Heart left ventricle (tissue), 16 donors: ENCODE measurements at regions of chr13 and their contacts with region 1.

Region 1: DNA sequence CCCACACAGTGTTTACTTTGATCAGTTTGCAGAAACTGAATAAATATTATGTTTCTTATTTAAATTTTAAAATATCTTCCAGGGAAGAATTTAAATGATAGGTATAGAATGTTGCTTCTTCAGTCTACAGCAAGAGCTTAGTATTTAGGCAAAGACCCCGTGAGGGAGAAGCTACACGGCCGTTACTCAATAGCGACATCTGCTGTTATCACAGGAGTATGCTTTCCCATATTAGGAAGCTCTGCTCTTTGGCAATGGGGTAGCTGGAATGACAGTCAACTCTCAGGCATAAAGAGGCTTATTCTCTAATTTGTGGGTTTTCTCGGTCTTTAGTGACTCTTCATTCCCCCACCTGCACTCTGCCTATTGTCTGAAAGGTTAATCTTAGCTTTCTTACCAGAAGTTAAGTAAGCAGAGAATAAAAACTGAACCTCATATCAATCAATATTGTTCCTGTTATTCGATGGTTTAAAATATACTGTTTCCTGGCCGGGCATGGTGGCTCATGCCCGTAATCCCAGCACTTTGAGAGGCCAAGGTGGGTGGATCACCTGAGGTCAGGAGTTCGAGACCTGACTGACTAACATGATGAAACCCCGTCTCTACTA is 13.2 kb upstream of the LHFPL6 start:
- DNase-seq: peak in 4 of 5 donors; percentile 29 to 57 (median 46)
- ATAC-seq: peak in 3 of 4 donors; percentile 83 to 88 (median 85)
- H3K4me3 ChIP-seq: no peak overlapping the region
- H3K27ac ChIP-seq: no peak overlapping the region
- H3K4me1 ChIP-seq: peaks cover 0 to 10% (median 0%) of the 10 kb centered on the region in 12 donors
- H3K27me3 ChIP-seq: no peaks in the 10 kb centered on the region
- CTCF ChIP-seq: peak; percentile 84 to 98 (median 91)
- POLR2A ChIP-seq: no peak

Region 2: GRCh38 chr13:39051157-39051556 is 565.0 kb before region 1 on chr13:
- intact Hi-C with region 1: loop called (anchors 1 to 5 kb)
- DNase-seq: no peak
- ATAC-seq: peak in 1 of 4 donors; percentile 41
- H3K4me3 ChIP-seq: no peak overlapping the region
- H3K27ac ChIP-seq: no peak overlapping the region
- H3K4me1 ChIP-seq: no peaks in the 10 kb centered on the region
- H3K27me3 ChIP-seq: no peaks in the 10 kb centered on the region
- CTCF ChIP-seq: peak; percentile 18 to 73 (median 55)
- POLR2A ChIP-seq: no peak

Region 3: GRCh38 chr13:39144941-39145533 is 471.2 kb before region 1 on chr13:
- intact Hi-C with region 1: loop called in 9 of 10 experiments (anchors 2 to 5 kb)
- DNase-seq: peak in 4 of 5 donors; percentile 47 to 65 (median 62)
- ATAC-seq: peak; percentile 57 to 77 (median 74)
- H3K4me3 ChIP-seq: peak overlapping the region in 7 of 12 donors; percentile 13 to 52 (median 21)
- H3K27ac ChIP-seq: peak overlapping the region in 6 of 12 donors; percentile 1 to 47 (median 23)
- H3K4me1 ChIP-seq: peaks cover 0 to 20% (median 0%) of the 10 kb centered on the region in 12 donors
- H3K27me3 ChIP-seq: no peaks in the 10 kb centered on the region
- CTCF ChIP-seq: peak; percentile 62 to 91 (median 84)
- POLR2A ChIP-seq: no peak

Region 4: GRCh38 chr13:39217471-39217870 is 398.7 kb before region 1 on chr13:
- intact Hi-C with region 1: no loop called
- DNase-seq: no peak
- ATAC-seq: no peak
- H3K4me3 ChIP-seq: no peak overlapping the region
- H3K27ac ChIP-seq: no peak overlapping the region
- H3K4me1 ChIP-seq: no peaks in the 10 kb centered on the region
- H3K27me3 ChIP-seq: no peaks in the 10 kb centered on the region
- CTCF ChIP-seq: no peak
- POLR2A ChIP-seq: no peak

Region 5: GRCh38 chr13:39263033-39263432 is 353.2 kb before region 1 on chr13:
- intact Hi-C with region 1: loop called in 4 of 10 experiments (anchors 5 kb)
- DNase-seq: peak in 4 of 5 donors; percentile 37 to 42 (median 41)
- ATAC-seq: peak; percentile 76 to 89 (median 88)
- H3K4me3 ChIP-seq: no peak overlapping the region
- H3K27ac ChIP-seq: peak overlapping the region in 8 of 12 donors; percentile 13 to 80 (median 46)
- H3K4me1 ChIP-seq: peaks cover 5 to 59% (median 31%) of the 10 kb centered on the region in 12 donors
- H3K27me3 ChIP-seq: no peaks in the 10 kb centered on the region
- CTCF ChIP-seq: peak; percentile 54 to 82 (median 71)
- POLR2A ChIP-seq: no peak

Region 6: DNA sequence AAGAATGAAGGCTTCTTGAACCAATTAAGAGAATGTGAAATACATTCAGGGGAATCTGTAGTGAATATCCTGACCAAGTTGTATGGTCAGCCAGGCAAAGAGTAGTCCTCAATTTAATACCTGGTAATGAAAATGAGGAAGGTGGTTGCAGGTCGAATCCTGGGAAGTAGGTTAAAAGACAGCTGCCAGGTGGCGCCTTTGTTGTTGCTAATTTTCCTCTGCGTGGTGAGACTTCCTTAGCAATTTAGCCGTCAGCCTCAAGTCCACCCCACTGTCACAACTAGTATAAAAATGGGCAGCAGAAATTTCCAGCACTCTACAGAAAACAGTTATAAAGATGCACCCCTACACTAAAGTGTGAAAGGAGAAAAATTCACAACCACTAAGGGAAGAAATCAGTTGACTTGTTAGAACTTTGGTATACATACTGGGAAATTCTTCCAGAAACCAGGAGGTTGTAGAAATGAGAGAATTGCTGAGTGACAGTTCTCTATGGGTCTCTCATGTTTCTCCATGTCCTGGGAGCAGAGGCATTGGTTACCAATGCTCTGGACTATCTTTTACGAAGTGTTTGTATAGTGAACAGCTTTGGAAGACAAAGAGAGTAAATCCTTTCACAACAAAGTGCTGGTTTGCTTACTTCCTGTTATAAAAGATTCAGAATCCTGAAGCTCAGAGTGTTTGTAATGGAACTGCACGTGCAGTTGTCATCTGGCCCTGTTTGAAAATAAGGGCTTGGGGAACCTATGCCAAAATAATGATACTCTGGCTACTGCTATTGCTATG is 342.0 kb before region 1 on chr13:
- intact Hi-C with region 1: loop called in 6 of 10 experiments (anchors 2 to 5 kb)
- DNase-seq: no peak
- ATAC-seq: peak in 2 of 4 donors; percentile 24 to 50
- H3K4me3 ChIP-seq: no peak overlapping the region
- H3K27ac ChIP-seq: no peak overlapping the region
- H3K4me1 ChIP-seq: peaks cover 0 to 22% (median 12%) of the 10 kb centered on the region in 12 donors
- H3K27me3 ChIP-seq: no peaks in the 10 kb centered on the region
- CTCF ChIP-seq: peak in 10 of 12 donors; percentile 5 to 44 (median 19)
- POLR2A ChIP-seq: no peak

Region 7: DNA sequence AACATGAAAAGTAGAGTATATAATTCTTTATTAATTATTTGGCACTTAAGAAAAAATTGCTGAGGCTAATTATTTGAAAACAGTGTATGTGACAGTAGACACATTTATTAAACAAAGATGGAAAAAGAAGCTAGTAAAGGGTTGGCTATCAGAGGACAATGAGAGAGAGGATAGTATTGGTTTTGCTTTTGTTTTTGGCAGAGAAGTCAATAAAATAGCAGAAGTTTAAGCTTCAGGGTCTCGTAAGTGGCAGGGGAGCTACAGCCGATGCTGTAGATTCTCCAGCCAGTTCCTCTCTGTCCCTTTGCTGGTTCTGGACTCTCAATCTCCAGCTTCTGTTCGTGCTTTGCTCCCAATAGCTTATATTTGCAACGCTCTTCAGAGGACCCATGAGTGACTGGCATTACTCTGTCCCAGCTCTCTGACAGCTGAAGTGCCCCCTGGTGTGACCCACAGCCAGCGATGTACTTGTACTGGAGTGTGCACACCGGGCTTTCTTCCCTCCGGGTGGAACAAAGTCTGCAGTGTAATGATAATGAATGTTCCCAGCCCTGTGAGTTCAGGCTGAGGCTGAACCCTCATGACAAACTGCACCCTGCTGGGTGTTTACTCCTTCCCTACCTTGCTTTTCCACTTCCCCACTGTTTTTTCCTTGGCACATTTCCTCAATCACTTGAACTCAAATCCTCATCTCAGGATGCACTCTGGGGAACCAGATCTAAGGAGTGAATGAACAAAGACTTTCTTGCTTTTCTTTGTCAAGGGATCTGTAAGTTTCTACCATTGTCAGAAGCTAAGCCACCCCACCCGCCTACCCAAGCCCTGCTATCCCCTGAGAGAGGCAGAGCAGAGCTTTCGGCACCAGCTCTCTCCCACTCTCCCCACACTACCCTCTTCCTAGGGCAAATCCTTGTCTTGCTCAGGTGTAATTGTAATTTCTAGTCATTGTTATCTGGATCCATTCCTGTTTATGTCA is 268.0 kb before region 1 on chr13:
- intact Hi-C with region 1: loop called in 1 of 10 experiments (anchors 5 kb)
- DNase-seq: peak; percentile 57 to 86 (median 71)
- ATAC-seq: peak; percentile 93 to 97 (median 94)
- H3K4me3 ChIP-seq: peak overlapping the region in 3 of 12 donors; percentile 9 to 36 (median 25)
- H3K27ac ChIP-seq: peak overlapping the region in 11 of 12 donors; percentile 4 to 83 (median 63)
- H3K4me1 ChIP-seq: peaks cover 0 to 63% (median 41%) of the 10 kb centered on the region in 12 donors
- H3K27me3 ChIP-seq: no peaks in the 10 kb centered on the region
- CTCF ChIP-seq: peak in 2 of 12 donors; percentile 9 to 24
- POLR2A ChIP-seq: no peak